ENCODE measurements at regions of chr21 and their contacts with region 1.

Region 1: GRCh38 chr21:41678944-41679343 is 87.9 kb downstream of the RIPK4 start:
- DNase-seq: peak; percentile 99
- H3K4me3 ChIP-seq: peak overlapping the region in 2 of 3 experiments; percentile 37 to 40
- H3K27ac ChIP-seq: peak overlapping the region; percentile 94
- H3K4me1 ChIP-seq: peaks cover 61% of the 10 kb centered on the region
- H3K27me3 ChIP-seq: no peaks in the 10 kb centered on the region
- CTCF ChIP-seq: no peak

Region 2: DNA sequence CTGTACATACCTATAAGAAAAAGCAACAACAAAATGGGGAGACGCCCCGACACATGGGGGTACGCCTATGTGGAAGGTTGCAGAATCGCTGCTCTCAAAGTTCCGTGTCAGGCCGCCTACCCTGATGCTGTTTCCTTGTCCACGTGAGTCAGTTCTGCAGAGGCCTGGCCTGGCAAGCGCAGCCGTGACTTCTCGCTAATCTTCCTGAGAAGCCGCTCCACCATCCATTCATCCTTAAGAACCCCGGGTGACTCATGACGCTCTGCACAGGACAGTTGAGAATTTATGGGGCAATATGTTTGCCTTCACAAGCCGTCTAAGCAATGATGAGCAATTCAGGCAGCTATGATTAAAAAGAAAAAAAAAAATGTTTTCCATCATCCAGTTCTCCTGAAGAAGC is 48.7 kb before region 1 on chr21:
- CTCF ChIA-PET with region 1: no interaction called
- dilution Hi-C with region 1: no loop called
- in situ Hi-C with region 1: no loop called
- intact Hi-C with region 1: loop called (anchors 1 kb)
- DNase-seq: peak; percentile 99
- H3K4me3 ChIP-seq: no peak overlapping the region
- H3K27ac ChIP-seq: peak overlapping the region; percentile 78
- H3K4me1 ChIP-seq: peaks cover 49% of the 10 kb centered on the region
- H3K27me3 ChIP-seq: no peaks in the 10 kb centered on the region
- CTCF ChIP-seq: no peak

Region 3: GRCh38 chr21:41726945-41727783 is 48.2 kb after region 1 on chr21:
- CTCF ChIA-PET with region 1: interaction called, 4 read pairs
- dilution Hi-C with region 1: loop called (anchors 5 kb)
- in situ Hi-C with region 1: no loop called
- intact Hi-C with region 1: loop called (anchors 1 kb)
- DNase-seq: peak; percentile 93
- H3K4me3 ChIP-seq: peak overlapping the region in 1 of 3 experiments; percentile 28
- H3K27ac ChIP-seq: peak overlapping the region; percentile 84
- H3K4me1 ChIP-seq: peaks cover 56% of the 10 kb centered on the region
- H3K27me3 ChIP-seq: no peaks in the 10 kb centered on the region
- CTCF ChIP-seq: no peak

Region 4: GRCh38 chr21:41741253-41742072 is 62.5 kb after region 1 on chr21:
- CTCF ChIA-PET with region 1: no interaction called
- dilution Hi-C with region 1: no loop called
- in situ Hi-C with region 1: no loop called
- intact Hi-C with region 1: no loop called
- DNase-seq: no peak
- H3K4me3 ChIP-seq: no peak overlapping the region
- H3K27ac ChIP-seq: no peak overlapping the region
- H3K4me1 ChIP-seq: no peaks in the 10 kb centered on the region
- H3K27me3 ChIP-seq: no peaks in the 10 kb centered on the region
- CTCF ChIP-seq: no peak

Region 5: GRCh38 chr21:41752231-41752681 is 73.3 kb after region 1 on chr21:
- CTCF ChIA-PET with region 1: no interaction called
- dilution Hi-C with region 1: no loop called
- in situ Hi-C with region 1: no loop called
- intact Hi-C with region 1: loop called (anchors 2 kb)
- DNase-seq: peak; percentile 83
- H3K4me3 ChIP-seq: peak overlapping the region in 1 of 3 experiments; percentile 5
- H3K27ac ChIP-seq: peak overlapping the region; percentile 50
- H3K4me1 ChIP-seq: peaks cover 74% of the 10 kb centered on the region
- H3K27me3 ChIP-seq: no peaks in the 10 kb centered on the region
- CTCF ChIP-seq: no peak

Region 6: GRCh38 chr21:41777951-41778874 is 99.3 kb after region 1 on chr21:
- CTCF ChIA-PET with region 1: interaction called, 4 read pairs
- dilution Hi-C with region 1: no loop called
- in situ Hi-C with region 1: no loop called
- intact Hi-C with region 1: loop called (anchors 1 kb)
- DNase-seq: peak; percentile 86
- H3K4me3 ChIP-seq: no peak overlapping the region
- H3K27ac ChIP-seq: peak overlapping the region; percentile 56
- H3K4me1 ChIP-seq: peaks cover 25% of the 10 kb centered on the region
- H3K27me3 ChIP-seq: no peaks in the 10 kb centered on the region
- CTCF ChIP-seq: peak; percentile 94

Region 7: DNA sequence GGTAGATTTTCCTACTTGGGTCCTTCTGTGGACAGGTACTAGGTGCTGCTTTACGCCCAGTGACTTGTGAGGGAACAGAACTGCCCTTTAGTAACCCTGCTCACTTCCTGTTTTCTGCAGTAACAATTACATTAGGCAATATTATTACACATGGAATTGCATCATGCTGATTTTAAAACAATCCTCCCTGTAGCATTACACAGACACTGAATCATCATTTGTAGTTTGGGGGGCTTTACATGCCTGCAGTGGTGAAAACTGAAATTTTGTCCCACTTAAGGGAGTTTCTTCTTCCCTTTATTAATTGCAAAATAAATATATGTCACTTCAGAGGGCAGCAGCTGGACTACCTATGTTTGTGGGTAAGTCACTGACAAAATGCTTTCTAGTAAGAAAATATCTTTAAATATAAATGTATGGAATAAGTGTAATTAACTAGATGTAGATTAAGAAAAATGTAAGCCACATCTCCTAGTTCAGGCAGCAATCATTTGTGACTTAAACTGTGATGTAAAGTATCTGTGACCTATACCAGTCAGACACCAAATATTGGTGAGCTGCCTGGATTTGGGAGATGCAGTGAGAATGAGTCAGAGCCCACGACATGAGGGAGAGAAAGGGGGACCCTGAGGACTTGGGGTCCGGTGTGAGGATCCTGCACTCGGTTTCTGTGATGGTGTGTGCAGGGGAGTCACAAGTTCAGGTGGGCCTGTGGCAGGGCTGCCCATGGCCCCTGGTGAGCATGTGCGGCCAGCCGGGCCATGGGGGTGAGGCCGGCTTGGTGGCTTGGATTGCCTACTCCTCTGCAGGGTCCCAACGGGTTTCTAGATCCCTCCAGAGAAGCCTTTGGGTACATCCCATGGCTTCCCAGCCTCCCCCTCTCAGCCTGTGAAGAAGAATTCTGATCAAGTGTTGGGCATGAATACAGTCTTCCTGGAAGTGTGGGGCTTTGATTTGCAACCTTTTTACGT is 520.8 kb after region 1 on chr21:
- CTCF ChIA-PET with region 1: no interaction called
- dilution Hi-C with region 1: no loop called
- in situ Hi-C with region 1: no loop called
- intact Hi-C with region 1: no loop called
- DNase-seq: peak; percentile 73
- H3K4me3 ChIP-seq: no peak overlapping the region
- H3K27ac ChIP-seq: peak overlapping the region; percentile 57
- H3K4me1 ChIP-seq: peaks cover 29% of the 10 kb centered on the region
- H3K27me3 ChIP-seq: no peaks in the 10 kb centered on the region
- CTCF ChIP-seq: no peak

Measured in mammary epithelial cell (primary cell).